ENCODE measurements at regions of chr12 and their contacts with region 1.

Region 1: DNA sequence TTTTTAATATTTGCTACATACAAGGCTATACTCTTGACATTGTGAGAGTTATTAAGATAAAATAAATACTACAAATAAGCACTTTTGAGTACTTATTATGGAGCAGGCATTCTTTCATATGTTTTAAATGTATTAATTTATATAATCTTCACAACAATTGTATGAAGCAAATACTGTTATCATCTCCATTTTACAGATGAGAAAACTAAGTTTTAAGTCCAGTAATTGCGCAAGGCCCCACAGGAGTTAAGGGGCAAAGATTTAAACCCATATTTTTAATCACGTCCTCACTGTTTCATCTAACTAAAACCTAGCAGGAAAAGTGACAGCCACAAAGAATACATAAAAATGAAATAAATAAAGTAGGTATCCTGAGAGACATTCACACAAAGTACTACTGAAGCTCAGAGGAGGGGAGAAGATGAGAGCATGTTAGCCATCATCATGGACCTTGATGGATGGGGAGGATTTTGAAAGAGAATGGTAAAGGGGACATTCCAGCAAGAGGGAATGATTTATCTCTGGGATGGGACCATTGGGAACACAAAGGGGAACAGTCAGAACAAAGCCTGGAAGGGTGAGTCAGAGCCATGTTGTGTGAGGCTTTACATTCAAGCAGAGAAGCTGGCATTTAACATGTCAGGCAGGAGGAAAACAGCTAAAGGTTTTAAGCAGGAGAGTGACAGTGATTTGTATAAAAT is 174.8 kb downstream of the SYT10 start:
- DNase-seq: no peak
- H3K4me3 ChIP-seq: no peak overlapping the region
- H3K27ac ChIP-seq: no peak overlapping the region
- H3K4me1 ChIP-seq: no peaks in the 10 kb centered on the region
- H3K27me3 ChIP-seq: no peaks in the 10 kb centered on the region
- CTCF ChIP-seq: no peak
- EP300 ChIP-seq: no peak
- POLR2A ChIP-seq: no peak

Region 2: DNA sequence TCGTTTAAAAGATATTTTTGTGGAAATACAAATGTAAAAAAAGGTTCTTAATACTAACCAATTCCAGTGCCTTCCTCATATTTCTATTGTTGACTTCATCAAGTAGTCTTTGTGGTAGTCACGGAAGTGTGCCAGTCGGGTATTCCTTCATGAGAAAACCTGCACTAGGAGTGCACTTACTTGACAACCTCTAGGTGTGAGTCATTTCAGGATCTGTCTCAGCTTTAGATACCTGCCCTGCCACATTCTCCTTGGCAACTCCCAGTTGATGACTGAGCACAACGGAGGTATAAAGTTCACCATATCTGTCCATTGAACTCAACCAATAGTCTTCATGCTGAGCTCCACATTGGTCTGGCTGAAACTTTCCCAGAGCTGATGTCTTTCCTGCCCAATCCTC is 40.9 kb before region 1 on chr12:
- in situ Hi-C with region 1: no loop called
- intact Hi-C with region 1: loop called (anchors 5 kb)
- DNase-seq: no peak
- H3K4me3 ChIP-seq: no peak overlapping the region
- H3K27ac ChIP-seq: no peak overlapping the region
- H3K4me1 ChIP-seq: no peaks in the 10 kb centered on the region
- H3K27me3 ChIP-seq: no peaks in the 10 kb centered on the region
- CTCF ChIP-seq: no peak
- EP300 ChIP-seq: no peak
- POLR2A ChIP-seq: no peak